MCF 10A (cell line): ENCODE measurements at regions of chrX and their contacts with region 1.

Region 1: GRCh38 chrX:140572724-140573123 is 67.9 kb upstream of the SOX3 start:
- DNase-seq: peak; percentile 68
- H3K4me3 Mint-ChIP-seq: no peak overlapping the region
- H3K27ac Mint-ChIP-seq: no peak overlapping the region
- H3K4me1 Mint-ChIP-seq: peaks cover 6% of the 10 kb centered on the region
- H3K27me3 Mint-ChIP-seq: peaks cover 29% of the 10 kb centered on the region
- CTCF ChIP-seq: peak; percentile 61

Region 2: GRCh38 chrX:140057001-140057411 is 515.7 kb before region 1 on chrX:
- CTCF ChIA-PET with region 1: interaction called, 3 read pairs
- POLR2A ChIA-PET with region 1: no interaction called
- intact Hi-C with region 1: loop called (anchors 2 kb)
- DNase-seq: peak; percentile 86
- H3K4me3 Mint-ChIP-seq: no peak overlapping the region
- H3K27ac Mint-ChIP-seq: no peak overlapping the region
- H3K4me1 Mint-ChIP-seq: peaks cover 6% of the 10 kb centered on the region
- H3K27me3 Mint-ChIP-seq: peaks cover 15% of the 10 kb centered on the region
- CTCF ChIP-seq: peak; percentile 83

Region 3: GRCh38 chrX:140586951-140587350 is 14.2 kb after region 1 on chrX:
- CTCF ChIA-PET with region 1: interaction called, 15 read pairs
- POLR2A ChIA-PET with region 1: no interaction called
- intact Hi-C with region 1: no loop called
- DNase-seq: no peak
- H3K4me3 Mint-ChIP-seq: no peak overlapping the region
- H3K27ac Mint-ChIP-seq: no peak overlapping the region
- H3K4me1 Mint-ChIP-seq: no peaks in the 10 kb centered on the region
- H3K27me3 Mint-ChIP-seq: peaks cover 89% of the 10 kb centered on the region
- CTCF ChIP-seq: no peak

Region 4: GRCh38 chrX:140724736-140725135 is 152.0 kb after region 1 on chrX:
- CTCF ChIA-PET with region 1: no interaction called
- POLR2A ChIA-PET with region 1: no interaction called
- intact Hi-C with region 1: no loop called
- DNase-seq: no peak
- H3K4me3 Mint-ChIP-seq: no peak overlapping the region
- H3K27ac Mint-ChIP-seq: no peak overlapping the region
- H3K4me1 Mint-ChIP-seq: no peaks in the 10 kb centered on the region
- H3K27me3 Mint-ChIP-seq: no peaks in the 10 kb centered on the region
- CTCF ChIP-seq: no peak